Left cardiac atrium (tissue), 4 donors: ENCODE measurements at regions of chr2 and their contacts with region 1.

Region 1: DNA sequence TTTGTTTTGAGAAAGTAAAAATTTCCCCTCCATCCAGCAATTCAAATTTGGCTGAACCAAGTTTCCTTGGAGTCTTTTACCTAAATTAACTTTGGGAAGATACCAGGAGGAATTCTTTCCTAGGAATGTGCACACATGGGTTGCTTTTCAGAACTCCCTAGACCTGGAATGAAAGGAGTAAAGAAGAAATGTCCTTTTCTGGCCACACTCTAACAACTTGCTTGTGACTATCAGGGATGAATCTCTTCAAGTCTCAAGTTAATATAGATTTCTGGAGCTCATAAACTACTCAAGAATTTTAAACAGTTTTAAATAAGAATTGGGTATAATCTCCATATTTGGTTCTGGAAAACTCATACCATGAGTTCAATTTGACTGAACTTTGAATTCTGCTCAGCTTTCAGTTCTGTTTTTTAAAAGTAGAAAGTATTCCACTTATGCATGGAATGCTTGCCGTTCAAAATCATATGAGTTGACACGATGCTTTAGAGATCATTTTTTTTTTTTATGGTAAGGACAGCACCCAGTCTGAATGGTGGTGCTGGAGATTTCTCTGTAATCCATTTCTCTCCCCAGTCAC is 7.7 kb downstream of the RASGRP3 start:
- DNase-seq: no peak
- ATAC-seq: no peak

Region 2: GRCh38 chr2:33168922-33169321 is 315.2 kb before region 1 on chr2:
- intact Hi-C with region 1: no loop called
- DNase-seq: no peak
- ATAC-seq: no peak

Region 3: GRCh38 chr2:33529771-33530351 is 45.7 kb after region 1 on chr2:
- intact Hi-C with region 1: loop called (anchors 5 to 10 kb)
- DNase-seq: no peak
- ATAC-seq: peak in 1 of 2 donors; percentile 27